ENCODE measurements at regions of chr2 and their contacts with region 1.

Region 1: DNA sequence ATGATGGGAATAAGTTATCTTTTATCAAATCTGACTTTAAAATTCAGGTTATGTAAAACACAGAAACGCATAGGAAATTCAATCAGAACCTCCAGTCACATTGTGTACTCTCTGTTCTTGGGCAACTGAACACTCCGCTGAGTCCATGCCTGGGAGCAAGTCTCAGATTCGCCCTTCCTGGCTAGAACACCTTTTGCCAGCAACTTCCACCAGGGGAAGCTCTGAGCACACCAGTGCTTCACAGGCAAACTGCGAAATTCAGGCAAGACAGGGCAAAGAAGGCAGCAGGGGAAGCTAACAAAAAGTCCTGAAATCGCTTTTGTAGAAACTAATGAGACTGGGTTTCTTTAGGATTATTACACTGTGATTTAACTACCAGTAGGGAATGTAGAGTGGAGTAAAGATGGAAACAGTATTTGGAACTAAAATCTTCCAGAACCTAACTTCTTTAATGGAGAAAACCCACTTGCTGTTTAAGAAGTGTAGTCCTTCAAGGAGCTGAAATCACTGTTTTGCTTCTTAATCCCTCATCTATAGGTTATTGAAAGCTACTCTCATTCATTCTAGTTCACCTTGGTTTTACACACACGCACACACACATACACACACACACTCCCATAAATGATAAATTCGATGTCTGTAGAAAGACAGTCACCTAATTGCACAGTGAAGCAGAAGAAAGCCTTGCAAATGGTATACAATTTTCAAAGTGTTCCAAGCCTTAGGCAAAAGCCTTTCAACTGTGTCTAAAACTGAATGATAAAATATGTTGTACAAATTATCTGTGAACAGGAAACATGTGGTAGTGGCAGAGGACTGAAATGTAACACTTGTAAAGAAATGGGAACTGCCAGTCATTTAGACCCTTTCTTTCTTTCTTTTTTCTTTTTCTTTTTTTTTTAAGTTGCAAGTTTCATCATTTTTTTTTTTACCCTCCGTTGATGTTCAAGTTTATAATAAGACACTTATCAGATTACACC is 214.5 kb downstream of the TMEM182 start:
- DNase-seq: peak in 1 of 2 experiments; percentile 15
- H3K4me3 ChIP-seq: no peak overlapping the region
- H3K27ac ChIP-seq: no peak overlapping the region
- H3K4me1 ChIP-seq: no peaks in the 10 kb centered on the region
- H3K27me3 ChIP-seq: peaks cover 11% of the 10 kb centered on the region
- CTCF ChIP-seq: peak; percentile 65

Region 2: DNA sequence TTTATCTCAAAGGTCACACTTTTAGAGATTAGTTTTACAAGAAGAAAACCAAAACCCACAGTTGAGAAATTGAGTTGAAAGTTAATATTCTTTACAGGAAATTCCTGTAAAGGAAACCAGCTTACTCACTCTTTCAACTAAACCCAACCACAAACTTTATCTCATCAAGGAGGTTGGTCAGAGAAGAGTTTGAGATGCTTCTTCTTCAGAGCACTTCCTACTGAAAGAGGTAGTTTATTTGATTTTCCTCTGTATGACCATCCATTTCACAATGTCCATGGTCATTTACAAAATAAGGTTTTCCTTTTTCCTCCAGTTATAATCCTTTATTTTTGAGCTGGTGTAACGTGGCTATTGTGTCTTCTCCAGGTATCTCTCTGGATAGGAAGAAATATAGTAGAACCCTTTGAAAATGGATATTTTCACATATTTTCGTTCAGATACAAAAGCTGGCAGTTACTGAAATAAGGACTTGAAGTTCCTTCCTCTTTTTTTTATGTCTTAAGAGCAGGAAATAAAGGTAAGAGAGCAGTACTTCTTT is 557.8 kb before region 1 on chr2:
- CTCF ChIA-PET with region 1: interaction called, 14 read pairs
- POLR2A ChIA-PET with region 1: no interaction called
- intact Hi-C with region 1: no loop called
- DNase-seq: no peak
- H3K4me3 ChIP-seq: no peak overlapping the region
- H3K27ac ChIP-seq: no peak overlapping the region
- H3K4me1 ChIP-seq: no peaks in the 10 kb centered on the region
- H3K27me3 ChIP-seq: no peaks in the 10 kb centered on the region
- CTCF ChIP-seq: no peak

Measured in PC-9 (cell line).